Activated naive CD4-positive, alpha-beta T cell treated with anti-CD3 and anti-CD28 coated beads for 36 hours (primary cell): ENCODE measurements at regions of chr7 and their contacts with region 1.

Region 1: DNA sequence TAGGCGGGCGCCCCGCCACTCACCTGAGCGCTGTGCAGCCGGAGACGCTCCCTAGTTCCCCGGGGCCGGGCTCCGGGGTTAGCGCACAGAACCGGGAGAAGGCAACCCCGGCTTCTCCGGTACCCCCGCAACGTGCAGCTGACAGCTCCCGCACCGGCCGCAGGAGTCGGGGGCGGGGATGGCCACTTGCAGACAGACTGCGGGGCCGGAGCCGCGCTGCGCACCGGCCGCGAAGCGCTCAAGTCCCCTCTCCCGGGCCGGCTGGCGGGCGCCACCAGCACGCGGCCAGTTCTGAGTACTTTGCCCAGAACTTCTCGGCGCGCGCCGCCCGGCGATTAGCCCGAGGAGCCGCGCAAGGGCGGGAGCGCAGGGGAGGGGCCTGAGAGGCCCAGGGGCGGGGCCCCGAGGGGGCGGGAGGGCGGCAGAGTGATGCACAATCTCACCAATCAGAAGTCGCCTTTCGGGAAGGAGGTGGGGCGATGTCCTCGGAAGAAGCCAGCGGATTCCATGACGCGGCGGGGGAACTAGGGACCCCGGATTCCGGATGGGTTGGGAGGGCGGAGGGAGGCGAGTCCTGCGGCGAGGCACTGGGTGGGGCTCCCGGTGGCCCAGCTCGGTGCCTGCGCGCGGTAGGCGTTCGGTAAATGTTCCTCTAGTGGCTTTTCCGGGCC is at the start of gene OSBPL3:
- DNase-seq: peak; percentile 95
- H3K4me3 Mint-ChIP-seq: peak within 1 kb of the TSS; percentile 87
- H3K27ac Mint-ChIP-seq: peak within 1 kb of the TSS; percentile 85
- H3K4me1 Mint-ChIP-seq: peaks cover 47% of the 10 kb centered on the region
- H3K27me3 Mint-ChIP-seq: no peaks in the 10 kb centered on the region
- total RNA-seq, gene OSBPL3: 25.1 to 27.9 TPM

Region 2: GRCh38 chr7:24685708-24686107 is 294.3 kb before region 1 on chr7:
- CTCF ChIA-PET with region 1: no interaction called
- intact Hi-C with region 1: no loop called
- DNase-seq: no peak
- H3K4me3 Mint-ChIP-seq: no peak overlapping the region
- H3K27ac Mint-ChIP-seq: no peak overlapping the region
- H3K4me1 Mint-ChIP-seq: no peaks in the 10 kb centered on the region
- H3K27me3 Mint-ChIP-seq: no peaks in the 10 kb centered on the region

Region 3: GRCh38 chr7:24812310-24812945 is 167.6 kb before region 1 on chr7:
- CTCF ChIA-PET with region 1: interaction called, 23 read pairs
- intact Hi-C with region 1: no loop called
- DNase-seq: peak; percentile 58
- H3K4me3 Mint-ChIP-seq: no peak overlapping the region
- H3K27ac Mint-ChIP-seq: no peak overlapping the region
- H3K4me1 Mint-ChIP-seq: no peaks in the 10 kb centered on the region
- H3K27me3 Mint-ChIP-seq: no peaks in the 10 kb centered on the region

Region 4: GRCh38 chr7:24917510-24918239 is 62.3 kb before region 1 on chr7:
- CTCF ChIA-PET with region 1: no interaction called
- intact Hi-C with region 1: loop called (anchors 2 kb)
- DNase-seq: no peak
- H3K4me3 Mint-ChIP-seq: no peak overlapping the region
- H3K27ac Mint-ChIP-seq: peak overlapping the region; percentile 37
- H3K4me1 Mint-ChIP-seq: peaks cover 94% of the 10 kb centered on the region
- H3K27me3 Mint-ChIP-seq: no peaks in the 10 kb centered on the region

Region 5: DNA sequence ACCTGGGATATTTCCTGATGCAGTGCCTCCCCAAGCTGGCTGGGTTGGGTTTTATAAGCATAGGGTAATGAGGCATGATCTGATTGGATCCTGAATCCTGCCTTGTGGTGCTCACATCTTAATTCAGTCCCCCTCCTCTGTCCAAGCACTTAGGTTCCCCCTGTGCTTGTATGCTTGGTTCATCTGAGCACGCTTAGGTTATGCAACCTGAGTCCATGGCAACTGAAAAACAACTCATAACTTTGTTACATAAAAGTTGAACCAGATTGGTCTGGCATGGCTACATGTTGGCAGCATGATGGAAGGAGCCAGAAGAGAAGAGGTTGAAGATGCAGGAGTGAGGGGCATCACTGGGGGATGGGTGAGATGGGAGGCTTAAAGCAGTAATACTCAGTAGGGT is 57.3 kb after region 1 on chr7:
- CTCF ChIA-PET with region 1: no interaction called
- intact Hi-C with region 1: no loop called
- DNase-seq: no peak
- H3K4me3 Mint-ChIP-seq: no peak overlapping the region
- H3K27ac Mint-ChIP-seq: no peak overlapping the region
- H3K4me1 Mint-ChIP-seq: no peaks in the 10 kb centered on the region
- H3K27me3 Mint-ChIP-seq: no peaks in the 10 kb centered on the region

Region 6: GRCh38 chr7:25060487-25061055 is 80.6 kb after region 1 on chr7:
- CTCF ChIA-PET with region 1: interaction called, 3 read pairs
- intact Hi-C with region 1: loop called (anchors 2 kb)
- DNase-seq: no peak
- H3K4me3 Mint-ChIP-seq: no peak overlapping the region
- H3K27ac Mint-ChIP-seq: no peak overlapping the region
- H3K4me1 Mint-ChIP-seq: no peaks in the 10 kb centered on the region
- H3K27me3 Mint-ChIP-seq: no peaks in the 10 kb centered on the region

Region 7: GRCh38 chr7:25093268-25093826 is 113.3 kb after region 1 on chr7:
- CTCF ChIA-PET with region 1: interaction called, 17 read pairs
- intact Hi-C with region 1: loop called (anchors 1 kb)
- DNase-seq: peak; percentile 90
- H3K4me3 Mint-ChIP-seq: no peak overlapping the region
- H3K27ac Mint-ChIP-seq: no peak overlapping the region
- H3K4me1 Mint-ChIP-seq: peaks cover 8% of the 10 kb centered on the region
- H3K27me3 Mint-ChIP-seq: peaks cover 2% of the 10 kb centered on the region

Region 8: DNA sequence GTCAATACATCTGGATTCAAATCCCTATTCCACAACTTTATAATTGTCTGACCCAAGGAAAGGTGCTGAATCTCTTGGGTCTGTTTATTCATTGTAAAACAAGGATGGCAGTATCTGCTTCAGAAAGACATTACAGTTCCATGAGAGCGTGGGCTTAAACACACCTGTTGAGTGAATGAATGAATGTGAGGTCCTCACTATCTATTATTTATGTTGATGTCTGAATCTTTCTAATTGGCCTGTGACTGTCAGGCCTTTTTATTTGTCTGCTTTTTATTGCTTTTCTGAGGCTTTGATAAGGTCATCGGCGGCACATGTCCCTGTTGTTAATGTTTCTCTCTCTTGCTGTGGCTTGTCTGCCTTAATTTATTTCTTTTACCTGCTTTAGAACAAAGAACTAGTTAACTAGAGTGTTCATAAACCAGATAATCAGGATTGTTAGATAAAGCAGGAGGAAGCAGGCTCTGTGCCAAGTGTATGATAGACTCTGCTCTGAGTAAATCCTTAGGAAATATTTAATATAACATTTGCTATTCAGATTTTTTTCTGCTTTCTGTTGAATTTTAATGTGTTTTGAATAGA is 187.4 kb after region 1 on chr7:
- CTCF ChIA-PET with region 1: no interaction called
- intact Hi-C with region 1: no loop called
- DNase-seq: no peak
- H3K4me3 Mint-ChIP-seq: no peak overlapping the region
- H3K27ac Mint-ChIP-seq: no peak overlapping the region
- H3K4me1 Mint-ChIP-seq: no peaks in the 10 kb centered on the region
- H3K27me3 Mint-ChIP-seq: no peaks in the 10 kb centered on the region

Region 9: GRCh38 chr7:25240340-25240739 is 260.3 kb after region 1 on chr7:
- CTCF ChIA-PET with region 1: no interaction called
- intact Hi-C with region 1: no loop called
- DNase-seq: no peak
- H3K4me3 Mint-ChIP-seq: no peak overlapping the region
- H3K27ac Mint-ChIP-seq: no peak overlapping the region
- H3K4me1 Mint-ChIP-seq: no peaks in the 10 kb centered on the region
- H3K27me3 Mint-ChIP-seq: peaks cover 4% of the 10 kb centered on the region